ENCODE measurements at regions of chr10 and their contacts with region 1.

Region 1: GRCh38 chr10:12252882-12253546 is 57.0 kb downstream of the CDC123 start:
- DNase-seq: no peak
- ATAC-seq: peak; percentile 96
- H3K4me3 ChIP-seq: no peak overlapping the region
- H3K27ac ChIP-seq: no peak overlapping the region
- H3K4me1 ChIP-seq: no peaks in the 10 kb centered on the region
- H3K27me3 ChIP-seq: no peaks in the 10 kb centered on the region
- CTCF ChIP-seq: peak; percentile 64 to 70 (median 69)
- EP300 ChIP-seq: no peak
- POLR2A ChIP-seq: no peak
- RAD21 ChIP-seq: peak; percentile 86

Region 2: GRCh38 chr10:12006671-12007070 is 246.3 kb before region 1 on chr10:
- CTCF ChIA-PET with region 1: no interaction called
- POLR2A ChIA-PET with region 1: no interaction called
- RAD21 ChIA-PET with region 1: no interaction called
- SMC1A ChIA-PET with region 1: no interaction called
- in situ Hi-C with region 1: no loop called
- intact Hi-C with region 1: no loop called
- DNase-seq: no peak
- ATAC-seq: no peak
- H3K4me3 ChIP-seq: no peak overlapping the region
- H3K27ac ChIP-seq: no peak overlapping the region
- H3K4me1 ChIP-seq: no peaks in the 10 kb centered on the region
- H3K27me3 ChIP-seq: no peaks in the 10 kb centered on the region
- CTCF ChIP-seq: no peak
- EP300 ChIP-seq: no peak
- POLR2A ChIP-seq: no peak
- RAD21 ChIP-seq: no peak

Region 3: GRCh38 chr10:12195603-12196506 is 57.2 kb before region 1 on chr10 and contains the starts of genes CDC123 and NUDT5:
- CTCF ChIA-PET with region 1: no interaction called
- POLR2A ChIA-PET with region 1: no interaction called
- RAD21 ChIA-PET with region 1: no interaction called
- SMC1A ChIA-PET with region 1: no interaction called
- in situ Hi-C with region 1: no loop called
- intact Hi-C with region 1: no loop called
- DNase-seq: peak; percentile 81
- ATAC-seq: peak; percentile 94
- H3K4me3 ChIP-seq: peak within 1 kb of the TSS; percentile 84
- H3K27ac ChIP-seq: peak within 1 kb of the TSS; percentile 98
- H3K4me1 ChIP-seq: peaks cover 4% of the 10 kb centered on the region; the same call in 1 of the 2 replicates
- H3K27me3 ChIP-seq: no peaks in the 10 kb centered on the region
- CTCF ChIP-seq: peak in 1 of 3 experiments; percentile 9; a peak in 1 of 6 replicates
- EP300 ChIP-seq: 0 out of 4 replicates have a peak, but pooled peaks of 1 of the 2 experiments have one; percentile 28
- POLR2A ChIP-seq: peak; percentile 95
- RAD21 ChIP-seq: no peak
- polyA plus RNA-seq, gene CDC123: 162 to 226 TPM
- polyA plus RNA-seq, gene NUDT5: 293 to 345 TPM

Region 4: DNA sequence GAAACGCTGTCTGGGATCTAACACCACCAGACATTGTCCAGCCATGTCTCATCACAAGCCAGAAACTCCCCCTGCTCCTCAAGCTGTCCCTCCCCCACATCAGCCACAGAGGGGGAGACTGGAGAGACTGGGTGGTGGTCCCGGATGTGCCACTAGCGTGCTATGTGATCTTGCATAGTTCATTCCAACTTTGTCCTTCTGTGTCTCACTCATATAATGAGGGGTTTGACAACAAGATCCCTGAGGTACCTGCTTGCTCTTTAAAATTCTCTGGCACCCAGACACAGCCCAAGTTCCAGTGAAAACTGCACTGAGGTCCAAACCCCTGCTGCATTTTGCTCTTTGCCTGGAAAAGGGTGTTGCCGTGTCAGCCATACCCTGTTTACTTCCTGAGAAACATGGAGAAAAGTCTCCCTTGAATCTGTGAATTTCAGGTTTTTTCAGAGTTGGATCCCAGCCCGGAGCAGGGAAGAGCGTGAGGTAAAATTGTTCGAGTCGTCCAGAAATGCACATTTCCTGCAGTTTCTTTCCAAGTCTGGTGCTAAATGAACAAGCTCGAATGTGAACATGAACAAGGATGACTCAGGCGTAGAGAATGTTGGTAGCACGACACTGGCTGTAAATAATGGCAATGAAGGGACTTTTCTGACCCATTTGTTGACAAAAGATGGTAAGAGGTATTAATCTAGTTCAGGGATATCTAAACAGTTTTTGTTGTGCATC is 592.0 kb after region 1 on chr10:
- CTCF ChIA-PET with region 1: no interaction called
- POLR2A ChIA-PET with region 1: no interaction called
- RAD21 ChIA-PET with region 1: no interaction called
- SMC1A ChIA-PET with region 1: no interaction called
- in situ Hi-C with region 1: no loop called
- intact Hi-C with region 1: loop called (anchors 5 kb)
- DNase-seq: no peak
- ATAC-seq: no peak
- H3K4me3 ChIP-seq: no peak overlapping the region
- H3K27ac ChIP-seq: no peak overlapping the region
- H3K4me1 ChIP-seq: no peaks in the 10 kb centered on the region
- H3K27me3 ChIP-seq: no peaks in the 10 kb centered on the region
- CTCF ChIP-seq: no peak
- EP300 ChIP-seq: no peak
- POLR2A ChIP-seq: no peak
- RAD21 ChIP-seq: no peak